Heart right ventricle (tissue), 16 donors: ENCODE measurements at regions of chr4 and their contacts with region 1.

Region 1: DNA sequence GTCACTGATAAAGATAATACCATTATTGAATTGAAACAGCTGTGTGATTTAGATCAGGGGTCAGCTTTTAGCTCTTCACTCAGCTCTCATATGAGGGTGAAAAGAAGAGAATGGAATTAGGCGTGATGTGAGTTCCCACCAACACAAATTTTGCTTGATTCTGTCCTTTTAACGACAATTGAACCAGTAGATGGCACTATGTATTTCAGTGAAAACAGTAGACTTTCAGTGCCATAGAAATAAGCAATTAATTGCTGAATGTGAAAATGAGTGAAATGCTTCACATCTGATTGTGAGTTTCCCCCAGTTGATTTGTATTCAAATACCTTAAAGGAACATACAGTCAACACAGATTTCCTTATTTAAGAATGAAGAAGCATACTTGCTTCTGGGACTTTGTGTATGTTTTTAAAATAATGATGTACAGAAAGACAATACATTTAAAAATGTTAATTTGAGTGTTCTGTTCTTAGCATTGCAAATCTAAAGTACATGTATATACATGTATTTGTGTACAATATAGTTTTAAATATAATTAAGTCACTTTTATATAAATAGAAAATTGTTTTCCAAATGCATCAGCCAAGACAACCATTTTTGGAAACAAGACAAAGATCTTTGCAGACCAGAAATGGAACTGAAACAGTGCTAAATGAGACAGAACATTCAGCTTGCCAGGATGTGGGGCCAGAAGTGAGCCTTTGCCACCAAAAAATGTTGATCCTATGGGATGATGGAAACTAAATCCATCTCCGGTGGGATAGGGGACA is 178.8 kb downstream of the SNCA start:
- DNase-seq: no peak
- ATAC-seq: no peak
- H3K4me3 ChIP-seq: no peak overlapping the region
- H3K27ac ChIP-seq: no peak overlapping the region
- H3K4me1 ChIP-seq: peaks cover 0 to 5% (median 0%) of the 10 kb centered on the region in 9 donors
- H3K27me3 ChIP-seq: no peaks in the 10 kb centered on the region
- CTCF ChIP-seq: peak in 7 of 9 donors; percentile 15 to 61 (median 50)

Region 2: GRCh38 chr4:88659055-88659889 is 998.8 kb before region 1 on chr4:
- intact Hi-C with region 1: no loop called
- DNase-seq: peak in 1 of 2 donors; percentile 46
- ATAC-seq: peak; percentile 87 to 98 (median 96)
- H3K4me3 ChIP-seq: no peak overlapping the region
- H3K27ac ChIP-seq: peak overlapping the region in 3 of 10 donors; percentile 28 to 44 (median 28)
- H3K4me1 ChIP-seq: peaks cover 0 to 12% (median 0%) of the 10 kb centered on the region in 9 donors
- H3K27me3 ChIP-seq: no peaks in the 10 kb centered on the region
- CTCF ChIP-seq: peak; percentile 39 to 81 (median 75)

Region 3: GRCh38 chr4:89868999-89869589 is 211.0 kb after region 1 on chr4:
- intact Hi-C with region 1: loop called in 9 of 10 experiments (anchors 5 to 10 kb)
- DNase-seq: no peak
- ATAC-seq: no peak
- H3K4me3 ChIP-seq: no peak overlapping the region
- H3K27ac ChIP-seq: no peak overlapping the region
- H3K4me1 ChIP-seq: no peaks in the 10 kb centered on the region
- H3K27me3 ChIP-seq: peaks cover 0 to 4% (median 0%) of the 10 kb centered on the region in 7 donors
- CTCF ChIP-seq: peak; percentile 16 to 67 (median 59)

Region 4: DNA sequence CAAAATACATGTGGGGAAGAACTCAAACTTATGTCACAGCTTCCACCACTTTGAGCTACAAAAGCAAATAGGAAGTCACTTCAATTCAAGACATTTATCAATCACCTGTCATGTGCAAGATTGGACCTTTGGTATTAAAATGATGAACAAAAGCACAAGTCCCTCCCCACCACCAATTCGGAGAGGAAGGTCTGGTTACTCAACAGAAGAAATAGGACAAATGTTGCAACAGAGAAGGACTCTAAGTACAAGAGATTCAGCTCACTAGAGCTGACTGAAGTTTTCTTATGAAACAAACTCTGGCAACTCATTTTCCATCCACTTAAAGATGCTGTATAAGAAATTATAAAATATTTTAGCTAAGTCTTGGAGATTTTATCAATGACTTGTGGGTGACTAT is 220.5 kb after region 1 on chr4:
- intact Hi-C with region 1: loop called in 2 of 10 experiments (anchors 10 kb)
- DNase-seq: no peak
- ATAC-seq: no peak
- H3K4me3 ChIP-seq: no peak overlapping the region
- H3K27ac ChIP-seq: no peak overlapping the region
- H3K4me1 ChIP-seq: no peaks in the 10 kb centered on the region
- H3K27me3 ChIP-seq: no peaks in the 10 kb centered on the region
- CTCF ChIP-seq: no peak